Activated T-helper 2 cell treated with anti-CD3 and anti-CD28 coated beads, Interferon-gamma antibody, Interleukin-2, Interleukin-4, amounts not matched to agents 10 μg/mL and 5 μg/mL and 100 μg/mL, durations not matched to agents 14 hours and 24 hours and 36 hours (primary cell): ENCODE measurements at regions of chr6 and their contacts with region 1.

Region 1: GRCh38 chr6:89819336-89820130 is at the start of gene MDN1:
- DNase-seq: peak; percentile 87
- H3K4me3 Mint-ChIP-seq: peak within 1 kb of the TSS; percentile 91
- H3K27ac Mint-ChIP-seq: peak within 1 kb of the TSS; percentile 97
- H3K4me1 Mint-ChIP-seq: peaks cover 21% of the 10 kb centered on the region
- H3K27me3 Mint-ChIP-seq: no peaks in the 10 kb centered on the region
- total RNA-seq, gene MDN1: 61.7 and 66.5 TPM in 2 replicates

Region 2: DNA sequence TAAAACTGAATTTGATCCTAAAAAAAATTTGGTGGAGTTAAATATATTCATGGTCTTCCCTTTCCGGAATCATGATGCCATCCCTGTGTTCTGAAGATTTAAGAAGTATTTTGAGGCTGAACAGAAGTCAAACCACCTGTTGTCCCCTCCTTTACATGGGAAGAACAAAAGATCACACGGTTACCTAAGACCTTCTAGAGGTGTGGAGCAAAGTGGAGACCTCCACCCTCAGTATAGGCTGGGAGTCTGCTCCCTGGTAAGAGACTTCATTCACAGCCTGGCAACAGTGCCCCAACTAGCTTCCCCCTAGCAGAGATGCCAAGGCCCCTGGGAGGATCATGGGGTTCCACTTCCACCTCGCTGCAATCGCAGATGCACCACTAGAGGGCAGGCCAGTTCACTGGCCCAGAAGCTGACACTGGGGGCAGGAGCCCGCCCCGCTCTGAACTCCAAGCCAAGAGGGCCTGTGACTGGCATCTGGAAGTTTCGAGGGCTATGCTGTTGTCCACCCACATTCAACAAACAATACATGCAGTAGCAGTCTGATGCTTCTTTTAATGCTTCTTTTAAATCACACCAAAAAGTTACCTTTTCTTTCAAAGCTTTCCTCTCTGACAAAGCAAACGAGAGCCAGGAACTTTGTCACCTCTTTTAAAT is 447.6 kb before region 1 on chr6:
- intact Hi-C with region 1: no loop called
- DNase-seq: peak; percentile 74
- H3K4me3 Mint-ChIP-seq: no peak overlapping the region
- H3K27ac Mint-ChIP-seq: peak overlapping the region; percentile 47
- H3K4me1 Mint-ChIP-seq: peaks cover 30% of the 10 kb centered on the region
- H3K27me3 Mint-ChIP-seq: no peaks in the 10 kb centered on the region

Region 3: DNA sequence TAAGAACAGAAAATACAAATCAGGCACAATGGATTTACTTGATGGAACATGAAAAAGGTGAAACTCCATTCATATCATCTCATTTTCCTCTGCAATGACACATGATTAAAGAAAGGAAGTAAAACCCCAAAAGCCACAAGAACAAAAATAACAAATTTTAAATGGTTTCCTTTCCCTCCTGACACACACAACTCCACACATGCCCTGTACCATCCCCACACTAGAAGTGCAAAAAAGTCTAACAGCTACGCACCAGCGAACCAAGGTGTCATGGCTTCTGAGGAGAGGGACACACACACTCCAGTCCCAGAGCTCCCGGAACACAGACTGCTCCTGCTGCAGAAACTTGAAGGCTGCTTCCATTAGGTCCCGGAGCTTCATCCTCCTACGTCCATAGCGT is 25.2 kb before region 1 on chr6:
- intact Hi-C with region 1: loop called (anchors 2 kb)
- DNase-seq: no peak
- H3K4me3 Mint-ChIP-seq: peak overlapping the region; percentile 28
- H3K27ac Mint-ChIP-seq: peak overlapping the region; percentile 58
- H3K4me1 Mint-ChIP-seq: peaks cover 31% of the 10 kb centered on the region
- H3K27me3 Mint-ChIP-seq: no peaks in the 10 kb centered on the region

Region 4: DNA sequence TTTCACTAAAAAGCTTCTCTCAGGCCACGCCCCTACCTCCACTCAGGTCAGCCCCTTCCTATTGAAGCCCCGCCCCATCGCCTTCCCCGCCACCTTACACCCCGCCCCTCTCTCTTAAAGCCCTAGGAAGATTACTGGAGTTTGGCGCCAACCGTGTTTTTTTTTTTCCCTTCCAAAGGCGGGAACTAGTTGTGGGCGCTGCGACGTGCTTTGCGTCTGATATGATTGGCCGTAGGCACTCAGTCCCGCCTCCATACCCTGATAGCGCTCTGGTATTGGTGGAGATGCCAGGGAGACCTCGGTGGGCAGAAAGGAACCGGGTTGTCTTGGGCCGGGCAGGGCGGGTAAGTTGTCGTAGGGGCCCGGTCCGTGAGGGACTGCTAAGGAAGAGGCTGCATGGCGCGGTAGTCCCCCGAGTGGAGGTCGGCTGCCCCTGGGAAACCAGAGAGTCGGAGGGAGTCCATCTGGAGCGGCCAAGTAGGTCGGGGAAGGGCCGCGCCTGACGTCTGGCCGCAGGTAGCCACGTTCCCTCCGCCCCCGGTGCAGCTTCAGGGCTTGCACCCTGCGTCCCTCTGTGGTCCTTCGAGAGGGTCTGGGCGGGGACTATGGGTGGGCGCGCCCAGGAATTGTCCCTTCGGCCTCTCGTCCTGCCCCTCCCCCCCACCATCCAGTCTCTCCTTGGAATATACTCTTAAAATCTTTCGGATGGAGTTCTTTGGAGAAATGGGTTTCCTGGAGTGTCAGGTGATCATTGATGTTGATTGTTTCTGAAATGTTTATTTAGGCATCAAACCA is 10.3 kb after region 1 on chr6 and contains the start of gene CASP8AP2:
- intact Hi-C with region 1: loop called (anchors 1 kb)
- DNase-seq: peak; percentile 93
- H3K4me3 Mint-ChIP-seq: peak within 1 kb of the TSS; percentile 98
- H3K27ac Mint-ChIP-seq: peak within 1 kb of the TSS; percentile 95
- H3K4me1 Mint-ChIP-seq: peaks cover 23% of the 10 kb centered on the region
- H3K27me3 Mint-ChIP-seq: no peaks in the 10 kb centered on the region
- total RNA-seq, gene CASP8AP2: 31.8 and 32.8 TPM in 2 replicates

Region 5: DNA sequence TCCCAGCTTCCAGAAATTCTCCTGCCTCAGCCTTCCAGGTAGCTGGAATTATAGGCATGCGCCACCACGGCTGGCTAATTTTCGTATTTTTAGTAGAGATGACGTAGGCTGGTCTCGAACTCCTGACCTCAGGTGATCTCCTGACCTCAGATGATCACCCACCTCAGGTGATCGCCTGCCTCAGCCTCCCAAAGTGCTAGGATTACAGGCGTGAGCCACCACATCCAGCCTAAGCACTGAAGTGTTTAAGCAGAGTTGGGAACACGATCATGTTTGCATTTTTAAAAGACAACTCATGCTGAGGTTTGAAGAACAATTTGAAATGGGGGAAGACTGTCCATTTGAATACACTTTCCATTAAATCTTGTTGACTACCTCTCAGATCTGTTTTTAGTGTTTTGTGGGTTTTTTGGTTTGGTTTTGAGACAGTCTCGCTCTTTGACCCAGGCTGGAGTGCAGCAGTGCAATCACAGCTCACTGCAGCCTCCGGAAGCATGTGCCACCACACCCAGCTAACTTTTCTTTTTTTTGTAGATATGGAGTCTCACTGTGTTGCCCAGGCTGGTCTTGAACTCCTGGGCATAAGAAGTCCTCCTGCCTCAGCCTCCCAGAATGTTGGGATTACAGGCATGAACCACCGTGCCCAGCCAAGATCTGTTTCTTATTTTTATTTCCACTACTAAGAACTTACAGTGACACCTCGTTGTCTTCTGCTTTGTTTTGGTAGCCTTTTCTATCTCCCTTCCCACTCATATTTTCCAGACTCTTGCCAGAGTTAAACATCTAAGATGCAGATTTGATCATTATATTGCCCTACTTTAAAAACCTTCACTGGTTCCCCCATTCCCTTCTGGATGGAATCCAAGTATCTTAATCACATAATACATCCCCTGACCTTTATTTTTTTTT is 15.6 kb after region 1 on chr6:
- intact Hi-C with region 1: loop called (anchors 2 kb)
- DNase-seq: peak; percentile 41
- H3K4me3 Mint-ChIP-seq: peak overlapping the region; percentile 60
- H3K27ac Mint-ChIP-seq: peak overlapping the region; percentile 88
- H3K4me1 Mint-ChIP-seq: peaks cover 46% of the 10 kb centered on the region
- H3K27me3 Mint-ChIP-seq: no peaks in the 10 kb centered on the region

Region 6: DNA sequence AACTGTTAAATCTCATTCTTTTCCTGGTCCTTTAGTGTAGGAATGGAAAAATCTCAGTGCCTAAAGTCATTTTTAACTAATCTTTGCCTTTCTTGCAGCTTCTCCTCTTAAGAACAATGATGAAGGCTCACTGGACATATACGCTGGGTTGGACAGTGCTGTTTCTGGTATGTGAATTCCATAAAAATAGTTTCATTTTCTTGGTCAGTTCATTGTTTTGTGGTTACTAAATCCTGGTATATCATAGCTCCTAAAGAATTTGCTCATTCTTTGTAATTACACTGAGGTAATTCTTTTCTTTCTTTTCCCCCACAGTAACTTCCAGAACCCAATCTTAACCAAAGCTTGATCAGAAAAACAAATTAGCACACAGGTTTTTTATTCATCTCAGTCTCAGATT is 33.5 kb after region 1 on chr6:
- intact Hi-C with region 1: no loop called
- DNase-seq: no peak
- H3K4me3 Mint-ChIP-seq: no peak overlapping the region
- H3K27ac Mint-ChIP-seq: no peak overlapping the region
- H3K4me1 Mint-ChIP-seq: peaks cover 8% of the 10 kb centered on the region
- H3K27me3 Mint-ChIP-seq: no peaks in the 10 kb centered on the region